Activated CD4-positive, alpha-beta T cell treated with anti-CD3 and anti-CD28 coated beads for 36 hours (primary cell): ENCODE measurements at regions of chr7 and their contacts with region 1.

Region 1: DNA sequence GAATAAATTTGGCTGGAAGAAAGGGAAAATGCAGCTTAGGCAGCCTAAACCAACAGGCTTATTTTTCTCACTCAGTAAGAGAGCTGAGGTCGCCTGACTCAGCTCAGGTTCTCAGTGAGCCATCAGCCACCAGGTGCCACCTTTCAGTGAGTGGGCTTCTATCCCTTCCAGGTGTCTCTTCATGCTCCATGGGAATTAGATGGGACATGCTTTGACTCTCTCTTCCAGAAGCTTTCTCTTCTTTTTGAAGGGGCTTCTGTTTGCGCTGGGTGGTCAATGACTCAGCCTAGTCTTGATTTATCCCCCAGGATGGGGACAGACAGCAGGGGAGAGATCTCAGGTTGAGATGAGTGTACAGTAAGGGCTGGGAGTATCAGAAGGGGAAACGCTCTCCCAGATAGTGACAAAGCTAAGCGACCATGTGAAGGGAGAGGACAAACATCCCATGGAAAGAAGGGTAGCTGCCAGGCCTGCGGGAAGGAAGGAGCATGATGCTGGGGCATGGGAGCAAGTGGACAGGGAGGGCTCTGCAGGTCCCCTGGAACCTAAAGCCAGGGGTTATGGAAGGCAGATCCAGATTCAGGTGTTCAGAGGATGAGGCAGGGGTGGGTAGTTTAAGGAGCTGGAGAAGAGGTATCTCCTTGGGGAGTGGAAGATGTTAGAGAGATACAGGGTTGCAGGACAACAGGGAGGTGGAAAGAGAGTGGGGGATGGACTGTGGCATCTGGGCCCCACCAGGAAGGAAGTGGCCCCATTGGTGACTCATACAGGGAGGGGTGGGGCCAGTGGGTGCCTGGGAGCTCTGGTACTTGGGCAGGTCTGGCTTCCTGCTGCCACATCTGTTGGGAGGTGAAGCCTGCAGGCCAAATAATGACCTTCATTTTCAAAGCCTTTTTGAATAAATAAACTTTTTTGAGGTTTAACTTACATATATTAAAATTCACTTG is 32.5 kb downstream of the OGDH start:
- DNase-seq: peak; percentile 90
- ATAC-seq: peak; percentile 71
- H3K4me3 Mint-ChIP-seq: peak overlapping the region; percentile 73
- H3K27ac Mint-ChIP-seq: peak overlapping the region; percentile 100
- H3K4me1 Mint-ChIP-seq: peaks cover 75% of the 10 kb centered on the region
- H3K27me3 Mint-ChIP-seq: no peaks in the 10 kb centered on the region

Region 2: DNA sequence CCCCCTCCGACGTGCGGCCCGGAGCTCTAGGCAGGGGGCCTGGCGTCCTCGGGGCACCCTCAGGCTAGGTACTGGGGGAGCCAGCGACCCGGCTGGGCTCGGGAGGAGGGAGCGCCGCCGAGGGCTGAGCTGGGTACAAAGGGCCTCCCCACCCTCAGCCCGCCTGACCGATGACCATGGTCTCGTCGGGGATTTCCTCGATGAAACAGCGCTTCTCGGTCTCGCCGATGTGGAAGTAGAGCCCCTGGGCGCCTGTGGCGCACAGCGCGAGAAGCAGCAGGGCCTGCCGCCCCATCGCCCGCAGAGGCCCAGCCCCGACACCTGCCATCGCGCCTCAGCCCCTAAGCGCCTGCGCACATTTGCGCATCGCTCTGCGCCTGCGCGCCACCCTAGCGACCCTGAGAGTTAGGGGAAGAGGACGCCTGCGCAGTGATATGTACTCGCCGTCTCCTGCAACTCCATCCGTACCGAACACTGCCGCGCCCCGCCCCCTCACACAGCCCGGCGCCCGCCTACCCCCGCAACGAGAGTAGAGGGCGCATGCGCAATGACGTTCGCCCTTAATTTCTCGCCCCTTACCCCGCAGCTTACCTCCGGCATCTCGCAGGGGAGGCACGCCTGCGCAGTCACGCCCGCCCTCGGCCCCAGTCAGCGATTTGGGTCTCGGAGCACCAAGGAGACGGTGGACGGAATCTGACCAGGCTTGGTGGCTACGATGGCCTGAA is 56.8 kb before region 1 on chr7 and contains the start of gene TMED4:
- CTCF ChIA-PET with region 1: no interaction called
- POLR2A ChIA-PET with region 1: no interaction called
- intact Hi-C with region 1: loop called (anchors 1 kb)
- DNase-seq: peak; percentile 100
- ATAC-seq: peak; percentile 95
- H3K4me3 Mint-ChIP-seq: peak within 1 kb of the TSS; percentile 85
- H3K27ac Mint-ChIP-seq: peak within 1 kb of the TSS; percentile 92
- H3K4me1 Mint-ChIP-seq: peaks cover 33% of the 10 kb centered on the region
- H3K27me3 Mint-ChIP-seq: no peaks in the 10 kb centered on the region
- total RNA-seq, gene TMED4: 71.6 to 73.0 TPM

Region 3: DNA sequence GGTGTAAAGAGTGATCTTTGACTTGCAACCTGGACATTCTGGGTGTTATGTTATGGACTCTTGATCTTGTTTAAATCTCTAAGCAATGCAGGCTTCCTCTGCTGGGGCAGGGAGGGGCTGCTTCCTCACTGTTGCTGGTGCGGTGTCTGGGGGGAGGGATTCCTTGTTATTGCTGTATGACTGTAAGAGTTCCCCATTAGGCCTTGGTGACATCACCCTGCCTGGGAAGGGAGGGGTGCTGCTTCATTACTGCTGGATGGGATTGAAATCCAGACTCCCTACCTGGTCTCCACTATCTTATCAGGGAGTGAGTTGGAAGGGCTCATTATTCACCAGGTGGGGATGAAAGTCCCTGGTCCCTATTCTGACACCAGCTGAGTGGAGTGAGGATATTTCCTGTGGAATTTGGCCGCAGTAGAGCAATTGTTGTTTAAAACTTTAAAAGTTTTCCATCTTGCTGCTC is 23.7 kb before region 1 on chr7:
- CTCF ChIA-PET with region 1: interaction called, 19 read pairs
- POLR2A ChIA-PET with region 1: interaction called, 29 read pairs
- intact Hi-C with region 1: loop called (anchors 1 kb)
- DNase-seq: peak; percentile 43
- ATAC-seq: no peak
- H3K4me3 Mint-ChIP-seq: no peak overlapping the region
- H3K27ac Mint-ChIP-seq: peak overlapping the region; percentile 66
- H3K4me1 Mint-ChIP-seq: peaks cover 65% of the 10 kb centered on the region
- H3K27me3 Mint-ChIP-seq: no peaks in the 10 kb centered on the region

Region 4: GRCh38 chr7:44655341-44655740 is 16.5 kb after region 1 on chr7:
- CTCF ChIA-PET with region 1: interaction called, 13 read pairs
- POLR2A ChIA-PET with region 1: no interaction called
- intact Hi-C with region 1: no loop called
- DNase-seq: no peak
- ATAC-seq: no peak
- H3K4me3 Mint-ChIP-seq: no peak overlapping the region
- H3K27ac Mint-ChIP-seq: no peak overlapping the region
- H3K4me1 Mint-ChIP-seq: peaks cover 7% of the 10 kb centered on the region
- H3K27me3 Mint-ChIP-seq: no peaks in the 10 kb centered on the region

Region 5: DNA sequence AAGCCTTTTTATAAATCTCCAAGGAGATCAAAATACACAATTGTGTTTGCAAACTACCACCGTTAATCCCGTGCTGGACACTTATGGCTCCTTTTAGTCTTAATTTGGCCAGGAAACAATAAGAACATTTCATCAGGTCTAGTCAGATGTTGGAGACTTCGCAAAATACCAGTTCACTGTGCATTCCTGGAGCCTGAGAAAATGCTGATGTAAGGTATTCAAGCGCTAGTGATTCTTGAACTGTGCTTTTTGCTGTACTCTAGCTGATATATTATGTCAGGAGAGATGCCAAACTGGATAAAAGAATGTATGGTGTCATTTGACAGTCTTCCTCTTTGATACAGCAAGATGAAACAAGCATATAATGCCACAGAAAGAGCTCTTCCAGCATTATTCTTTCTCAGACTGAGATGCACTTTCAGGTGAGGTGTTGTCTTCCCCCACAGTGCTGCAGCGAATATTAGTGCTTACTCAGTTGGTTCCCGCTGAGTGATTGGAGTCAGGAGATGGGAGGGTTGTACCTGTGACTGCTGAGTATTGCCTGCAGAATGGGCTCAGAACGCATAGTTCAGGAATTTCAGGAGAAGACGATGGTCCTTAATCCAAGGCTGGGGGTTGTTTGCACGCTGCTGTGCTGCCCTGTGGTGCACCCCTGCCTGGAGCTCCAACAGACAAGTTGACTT is 26.8 kb after region 1 on chr7:
- CTCF ChIA-PET with region 1: no interaction called
- POLR2A ChIA-PET with region 1: no interaction called
- intact Hi-C with region 1: no loop called
- DNase-seq: no peak
- ATAC-seq: no peak
- H3K4me3 Mint-ChIP-seq: no peak overlapping the region
- H3K27ac Mint-ChIP-seq: no peak overlapping the region
- H3K4me1 Mint-ChIP-seq: no peaks in the 10 kb centered on the region
- H3K27me3 Mint-ChIP-seq: no peaks in the 10 kb centered on the region